Activated T-helper 2 cell treated with anti-CD3 and anti-CD28 coated beads, Interferon-gamma antibody, Interleukin-2, Interleukin-4, amounts not matched to agents 10 μg/mL and 5 μg/mL and 100 μg/mL, durations not matched to agents 14 hours and 24 hours and 36 hours (primary cell): ENCODE measurements at regions of chr1 and their contacts with region 1.

Region 1: DNA sequence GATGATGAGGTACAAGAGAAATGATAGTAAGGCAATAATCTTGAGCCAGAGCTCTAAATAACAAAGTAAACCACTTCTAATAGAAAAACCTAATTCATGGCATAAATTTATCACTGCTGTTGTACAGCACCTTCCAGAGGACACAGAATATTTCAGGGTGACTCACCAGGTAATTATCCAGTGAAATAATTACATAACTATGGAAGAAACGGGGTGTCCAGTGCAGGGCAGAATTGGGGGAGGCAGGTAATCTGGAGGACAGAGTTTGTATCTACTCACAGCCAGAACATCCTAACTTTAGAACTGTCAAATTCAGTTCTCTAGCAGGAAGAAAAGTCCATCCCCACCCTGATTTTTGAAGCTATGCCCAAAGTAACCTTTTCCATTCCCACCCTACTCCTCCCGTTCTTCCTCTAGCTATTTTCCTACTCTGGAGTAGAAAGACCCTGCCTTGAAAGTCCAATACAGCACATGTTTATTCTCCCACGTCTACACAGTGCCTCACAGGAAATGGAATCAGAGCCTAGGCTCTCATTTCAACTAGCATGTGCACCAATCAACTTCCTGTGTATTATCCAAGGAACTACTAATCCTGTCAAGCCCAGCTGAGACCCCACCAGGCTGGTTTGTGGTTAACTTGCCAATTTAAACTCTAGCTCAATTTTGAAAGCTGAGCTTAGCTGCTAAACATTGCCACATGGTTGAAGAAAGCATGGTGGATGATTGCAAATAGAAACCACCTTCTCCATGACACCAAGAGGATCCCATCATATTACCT is 96.6 kb downstream of the PTPN14 start:
- DNase-seq: no peak
- H3K4me3 Mint-ChIP-seq: peak overlapping the region; percentile 6
- H3K27ac Mint-ChIP-seq: peak overlapping the region; percentile 81
- H3K4me1 Mint-ChIP-seq: peaks cover 80% of the 10 kb centered on the region
- H3K27me3 Mint-ChIP-seq: no peaks in the 10 kb centered on the region

Region 2: DNA sequence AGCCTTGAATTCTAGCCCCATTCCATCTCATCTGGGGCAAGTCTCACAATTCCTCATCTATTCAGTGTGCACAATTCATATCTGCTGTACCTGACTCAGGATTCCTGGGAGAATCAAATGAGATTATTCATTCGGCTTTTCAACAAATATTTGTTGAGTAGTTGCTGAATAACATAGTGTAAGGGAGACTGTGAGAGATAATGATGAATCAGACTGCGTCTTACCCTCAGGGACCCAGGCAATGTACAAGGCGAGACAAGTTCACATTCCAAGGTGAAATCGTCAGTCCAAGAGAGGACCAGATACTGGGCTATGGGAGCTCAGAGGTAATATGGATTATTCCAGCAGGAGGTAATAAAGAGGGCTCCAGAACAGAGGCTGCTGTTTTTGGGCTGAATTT is 241.7 kb before region 1 on chr1:
- intact Hi-C with region 1: no loop called
- DNase-seq: no peak
- H3K4me3 Mint-ChIP-seq: no peak overlapping the region
- H3K27ac Mint-ChIP-seq: no peak overlapping the region
- H3K4me1 Mint-ChIP-seq: peaks cover 3% of the 10 kb centered on the region
- H3K27me3 Mint-ChIP-seq: peaks cover 31% of the 10 kb centered on the region

Region 3: GRCh38 chr1:214386747-214387146 is 68.1 kb before region 1 on chr1:
- intact Hi-C with region 1: loop called (anchors 2 kb)
- DNase-seq: peak; percentile 41
- H3K4me3 Mint-ChIP-seq: peak overlapping the region; percentile 55
- H3K27ac Mint-ChIP-seq: peak overlapping the region; percentile 92
- H3K4me1 Mint-ChIP-seq: peaks cover 58% of the 10 kb centered on the region
- H3K27me3 Mint-ChIP-seq: no peaks in the 10 kb centered on the region

Region 4: DNA sequence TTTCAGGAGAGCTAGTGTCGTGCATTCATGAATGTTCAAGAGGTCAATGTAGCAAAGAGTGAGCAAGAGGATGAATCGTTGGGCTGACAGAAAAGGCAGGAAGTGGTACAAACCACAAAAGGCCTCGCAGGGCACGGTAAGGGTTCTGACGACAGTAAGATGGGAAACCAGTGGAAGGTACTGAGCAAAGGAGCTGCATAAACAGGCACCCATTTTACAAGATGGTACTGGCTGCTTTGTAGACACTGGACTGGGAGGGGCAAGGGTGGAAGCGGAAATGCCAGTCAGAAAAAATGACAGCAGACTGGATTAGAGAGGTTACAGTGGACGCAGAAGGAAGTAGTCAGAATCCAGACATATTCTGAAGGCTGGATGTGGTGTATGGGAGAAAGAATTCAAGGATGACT is 26.9 kb before region 1 on chr1:
- intact Hi-C with region 1: loop called (anchors 1 kb)
- DNase-seq: peak; percentile 85
- H3K4me3 Mint-ChIP-seq: peak overlapping the region; percentile 62
- H3K27ac Mint-ChIP-seq: peak overlapping the region; percentile 97
- H3K4me1 Mint-ChIP-seq: peaks cover 60% of the 10 kb centered on the region
- H3K27me3 Mint-ChIP-seq: no peaks in the 10 kb centered on the region

Region 5: GRCh38 chr1:214471458-214471857 is 16.6 kb after region 1 on chr1:
- intact Hi-C with region 1: loop called (anchors 2 kb)
- DNase-seq: no peak
- H3K4me3 Mint-ChIP-seq: no peak overlapping the region
- H3K27ac Mint-ChIP-seq: peak overlapping the region; percentile 65
- H3K4me1 Mint-ChIP-seq: peaks cover 55% of the 10 kb centered on the region
- H3K27me3 Mint-ChIP-seq: no peaks in the 10 kb centered on the region

Region 6: DNA sequence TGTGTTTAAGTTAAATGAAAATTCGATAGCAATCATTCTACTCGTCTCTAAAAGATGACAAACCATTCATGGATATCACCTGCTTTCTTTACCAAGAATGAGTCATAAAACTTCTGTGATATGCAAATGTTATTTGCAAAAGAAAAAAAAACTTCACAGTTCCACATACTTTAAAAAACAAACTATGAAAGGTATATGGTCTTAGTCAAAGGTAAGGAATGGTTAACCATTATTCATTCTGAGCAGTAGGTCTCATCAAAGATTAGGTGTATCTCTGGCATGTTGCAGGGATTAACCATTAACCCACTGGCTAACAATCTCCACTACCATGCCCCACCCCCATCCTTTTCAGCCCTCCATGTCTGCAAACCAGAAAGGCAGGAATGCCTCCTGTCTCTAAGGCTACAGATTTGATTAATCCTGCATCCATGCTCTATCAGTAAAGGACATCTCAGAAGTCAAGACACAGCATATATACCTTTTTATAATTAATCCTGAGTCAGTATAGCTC is 52.2 kb after region 1 on chr1:
- intact Hi-C with region 1: loop called (anchors 5 kb)
- DNase-seq: no peak
- H3K4me3 Mint-ChIP-seq: peak overlapping the region; percentile 7
- H3K27ac Mint-ChIP-seq: no peak overlapping the region
- H3K4me1 Mint-ChIP-seq: peaks cover 27% of the 10 kb centered on the region
- H3K27me3 Mint-ChIP-seq: peaks cover 1% of the 10 kb centered on the region